Heart left ventricle (tissue), 16 donors: ENCODE measurements at regions of chr14 and their contacts with region 1.

Region 1: DNA sequence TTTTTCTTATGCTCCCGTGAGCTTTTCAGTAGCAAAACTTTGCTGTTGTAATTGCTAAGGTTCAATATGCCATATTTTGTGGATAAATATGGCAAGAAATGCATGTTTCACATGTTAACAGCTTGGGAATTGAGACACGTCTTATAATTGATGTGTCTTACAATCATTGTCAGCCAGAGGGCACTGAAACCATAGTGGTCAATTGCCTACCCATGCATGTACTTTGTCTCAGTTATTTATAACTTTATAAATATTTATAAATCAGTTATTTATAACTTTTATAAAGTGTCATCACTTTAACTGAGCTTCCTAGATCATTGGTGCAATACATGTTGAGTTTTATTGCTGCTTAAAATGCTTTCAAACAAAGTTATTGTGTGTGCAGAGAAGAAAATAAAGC is 82.0 kb downstream of the CATSPERB start:
- DNase-seq: peak in 1 of 5 donors; percentile 7
- ATAC-seq: no peak
- H3K4me3 ChIP-seq: no peak overlapping the region
- H3K27ac ChIP-seq: no peak overlapping the region
- H3K4me1 ChIP-seq: no peaks in the 10 kb centered on the region
- H3K27me3 ChIP-seq: no peaks in the 10 kb centered on the region
- CTCF ChIP-seq: peak; percentile 33 to 72 (median 60)
- POLR2A ChIP-seq: no peak

Region 2: DNA sequence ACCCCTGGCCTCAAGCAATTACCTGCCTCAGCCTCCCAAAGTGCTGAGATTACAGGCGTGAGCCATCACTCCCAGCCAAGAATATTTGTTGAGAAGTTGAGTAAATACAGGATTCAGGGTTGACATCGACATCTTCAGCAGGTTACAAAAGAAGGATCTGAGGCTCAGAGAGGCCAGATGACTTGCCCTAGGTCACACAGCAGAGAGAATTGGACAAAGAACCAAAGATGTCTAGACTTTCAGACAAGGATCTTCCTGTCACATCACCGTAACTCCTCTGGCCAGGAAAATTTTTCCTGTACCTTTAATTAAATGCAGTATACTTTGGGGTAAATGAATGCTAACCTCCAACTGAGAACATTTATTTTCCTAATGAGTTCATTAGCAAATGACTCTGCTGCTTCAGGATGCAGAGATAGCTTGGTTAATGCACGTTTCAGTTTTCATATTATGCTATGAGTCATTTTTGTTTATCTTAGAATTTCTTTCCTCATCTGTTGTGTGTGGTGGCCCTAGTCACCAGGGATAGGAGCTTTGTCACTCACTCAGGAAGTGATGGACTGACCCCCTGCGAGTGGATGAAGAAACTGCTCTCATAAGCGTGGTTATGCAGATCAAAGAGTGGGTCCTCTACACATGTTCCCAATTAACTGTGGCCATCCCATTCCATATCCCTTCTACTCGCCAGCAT is 208.4 kb after region 1 on chr14:
- intact Hi-C with region 1: no loop called
- DNase-seq: no peak
- ATAC-seq: peak in 2 of 4 donors; percentile 40 to 45
- H3K4me3 ChIP-seq: no peak overlapping the region
- H3K27ac ChIP-seq: no peak overlapping the region
- H3K4me1 ChIP-seq: peaks cover 0 to 48% (median 3%) of the 10 kb centered on the region in 12 donors
- H3K27me3 ChIP-seq: peaks cover 0 to 15% (median 0%) of the 10 kb centered on the region in 9 donors
- CTCF ChIP-seq: no peak
- POLR2A ChIP-seq: no peak

Region 3: DNA sequence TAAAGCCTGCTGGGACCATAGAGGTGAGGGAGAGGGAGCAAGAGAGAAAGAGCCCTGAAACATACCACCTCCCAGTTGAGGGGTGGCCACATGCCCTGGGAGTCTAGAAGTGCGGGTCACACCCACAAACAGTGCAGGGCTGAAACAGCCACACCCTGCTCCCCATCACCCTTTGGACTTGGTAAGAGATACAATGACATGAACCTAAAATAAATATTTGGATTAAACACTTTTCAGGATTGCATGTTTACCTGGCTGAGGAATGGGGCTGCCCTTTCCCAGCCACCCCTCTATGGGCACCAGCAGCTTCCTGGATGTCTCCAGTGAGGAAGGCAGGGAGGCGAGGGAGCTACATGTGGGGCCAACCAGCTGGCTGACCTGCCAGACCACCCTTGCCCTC is 256.4 kb after region 1 on chr14:
- intact Hi-C with region 1: loop called (anchors 5 kb)
- DNase-seq: no peak
- ATAC-seq: no peak
- H3K4me3 ChIP-seq: no peak overlapping the region
- H3K27ac ChIP-seq: no peak overlapping the region
- H3K4me1 ChIP-seq: peaks cover 0 to 27% (median 3%) of the 10 kb centered on the region in 12 donors
- H3K27me3 ChIP-seq: no peaks in the 10 kb centered on the region
- CTCF ChIP-seq: no peak
- POLR2A ChIP-seq: no peak

Region 4: GRCh38 chr14:91911474-91912032 is 261.6 kb after region 1 on chr14:
- intact Hi-C with region 1: loop called (anchors 5 kb)
- DNase-seq: no peak
- ATAC-seq: peak; percentile 67 to 85 (median 79)
- H3K4me3 ChIP-seq: no peak overlapping the region
- H3K27ac ChIP-seq: no peak overlapping the region
- H3K4me1 ChIP-seq: peaks cover 0 to 16% (median 0%) of the 10 kb centered on the region in 12 donors
- H3K27me3 ChIP-seq: no peaks in the 10 kb centered on the region
- CTCF ChIP-seq: peak; percentile 22 to 62 (median 42)
- POLR2A ChIP-seq: no peak

Region 5: DNA sequence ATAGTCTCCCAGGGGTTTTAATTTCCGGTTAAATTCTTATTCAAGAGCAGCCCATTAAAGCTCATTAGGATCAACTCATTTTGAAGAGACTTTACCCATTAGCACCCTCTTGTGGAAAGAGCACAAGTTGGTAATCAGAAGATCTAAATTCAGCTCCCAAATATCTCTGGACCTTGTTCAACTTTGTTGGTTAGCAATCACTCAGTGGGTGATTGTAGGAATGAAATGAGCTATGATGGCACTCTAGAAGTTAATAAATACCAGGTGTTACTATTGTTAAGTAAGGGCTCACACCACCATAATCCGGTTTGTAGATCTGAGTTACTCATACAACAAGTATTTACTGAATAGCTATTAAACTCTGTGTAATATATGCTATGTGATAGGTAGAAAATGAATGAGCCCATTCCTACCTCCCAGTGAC is 347.0 kb after region 1 on chr14:
- intact Hi-C with region 1: loop called in 9 of 10 experiments (anchors 5 to 10 kb)
- DNase-seq: no peak
- ATAC-seq: peak in 3 of 4 donors; percentile 20 to 65 (median 36)
- H3K4me3 ChIP-seq: no peak overlapping the region
- H3K27ac ChIP-seq: no peak overlapping the region
- H3K4me1 ChIP-seq: peaks cover 0 to 33% (median 5%) of the 10 kb centered on the region in 12 donors
- H3K27me3 ChIP-seq: no peaks in the 10 kb centered on the region
- CTCF ChIP-seq: peak; percentile 35 to 69 (median 55)
- POLR2A ChIP-seq: no peak